ENCODE measurements at regions of chr1 and their contacts with region 1.

Region 1: DNA sequence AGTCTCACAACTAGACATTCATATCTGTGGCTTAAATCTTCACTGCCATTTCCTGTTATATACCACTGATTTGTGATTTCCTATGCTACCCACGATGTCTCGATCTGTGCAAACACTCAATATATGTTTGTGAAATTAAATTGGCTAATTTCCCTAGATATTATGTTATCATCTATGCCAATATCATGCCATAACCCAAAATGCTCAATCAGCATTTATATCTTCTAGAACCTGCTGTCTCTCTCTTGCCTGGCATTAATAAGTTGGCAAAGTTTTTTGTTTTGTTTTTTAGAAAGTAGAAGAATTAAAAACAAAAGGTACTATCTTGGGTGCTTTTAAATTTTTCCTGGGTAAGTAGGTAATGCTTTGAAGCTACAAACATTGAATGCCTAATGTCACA is 358.5 kb upstream of the DAB1 start:
- DNase-seq: no peak
- H3K4me3 ChIP-seq: no peak overlapping the region
- H3K27ac ChIP-seq: no peak overlapping the region
- H3K4me1 ChIP-seq: no peaks in the 10 kb centered on the region
- H3K27me3 ChIP-seq: no peaks in the 10 kb centered on the region
- CTCF ChIP-seq: no peak

Region 2: DNA sequence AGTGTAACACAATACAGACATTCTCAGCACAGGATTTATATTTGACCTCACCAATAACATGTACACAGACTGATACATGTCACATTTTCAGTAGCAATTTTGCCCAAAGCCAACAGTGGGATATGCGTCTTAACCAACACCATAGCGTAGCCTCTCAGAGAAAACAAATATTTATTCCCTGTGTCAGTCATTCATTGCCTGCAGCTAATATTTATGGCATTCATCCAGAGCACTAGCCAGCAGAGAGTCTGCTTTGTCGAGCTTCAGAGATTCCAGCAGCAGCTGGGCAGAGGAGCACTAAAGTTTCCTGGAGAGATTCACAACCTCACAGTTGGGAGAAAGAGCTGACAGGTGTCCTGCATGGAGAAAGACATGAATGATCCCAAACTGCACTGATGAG is 42.2 kb after region 1 on chr1:
- CTCF ChIA-PET with region 1: no interaction called
- dilution Hi-C with region 1: loop called (anchors 5 kb)
- in situ Hi-C with region 1: no loop called
- intact Hi-C with region 1: no loop called
- DNase-seq: peak; percentile 63
- H3K4me3 ChIP-seq: no peak overlapping the region
- H3K27ac ChIP-seq: no peak overlapping the region
- H3K4me1 ChIP-seq: peaks cover 10% of the 10 kb centered on the region
- H3K27me3 ChIP-seq: no peaks in the 10 kb centered on the region
- CTCF ChIP-seq: no peak

Region 3: GRCh38 chr1:58165073-58165472 is 382.7 kb after region 1 on chr1:
- CTCF ChIA-PET with region 1: no interaction called
- dilution Hi-C with region 1: no loop called
- in situ Hi-C with region 1: no loop called
- intact Hi-C with region 1: no loop called
- DNase-seq: no peak
- H3K4me3 ChIP-seq: no peak overlapping the region
- H3K27ac ChIP-seq: no peak overlapping the region
- H3K4me1 ChIP-seq: no peaks in the 10 kb centered on the region
- H3K27me3 ChIP-seq: no peaks in the 10 kb centered on the region
- CTCF ChIP-seq: no peak

Measured in mammary epithelial cell (primary cell).